ENCODE measurements at regions of chr2 and their contacts with region 1.

Region 1: DNA sequence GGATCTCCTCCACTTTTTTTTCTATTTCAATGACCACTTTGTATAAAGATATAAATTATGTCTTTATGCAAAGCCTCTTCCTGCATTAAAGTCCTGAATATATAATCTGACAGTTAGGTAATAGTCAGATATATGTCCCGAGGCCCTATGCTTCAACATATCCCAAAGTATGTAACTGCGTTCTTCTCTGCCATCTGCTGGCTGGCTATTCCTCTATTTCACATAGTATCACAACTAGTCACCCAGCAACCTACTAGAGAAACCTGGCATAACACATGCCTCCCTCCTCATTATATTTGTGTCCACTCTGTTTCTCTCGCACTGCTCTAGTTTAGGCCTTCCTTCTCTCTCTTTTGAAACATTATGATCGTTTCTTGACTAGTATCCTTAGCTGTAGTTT is 640.8 kb downstream of the DPP10 start:
- DNase-seq: no peak
- ATAC-seq: no peak
- H3K4me3 ChIP-seq: no peak overlapping the region
- H3K27ac ChIP-seq: no peak overlapping the region
- H3K4me1 ChIP-seq: no peaks in the 10 kb centered on the region
- H3K27me3 ChIP-seq: no peaks in the 10 kb centered on the region
- CTCF ChIP-seq: no peak
- POLR2A ChIP-seq: no peak
- RAD21 ChIP-seq: no peak

Region 2: GRCh38 chr2:115596659-115597375 is 513.6 kb after region 1 on chr2:
- CTCF ChIA-PET with region 1: no interaction called
- POLR2A ChIA-PET with region 1: no interaction called
- RAD21 ChIA-PET with region 1: no interaction called
- intact Hi-C with region 1: no loop called
- DNase-seq: no peak
- ATAC-seq: no peak
- H3K4me3 ChIP-seq: no peak overlapping the region
- H3K27ac ChIP-seq: no peak overlapping the region
- H3K4me1 ChIP-seq: no peaks in the 10 kb centered on the region
- H3K27me3 ChIP-seq: no peaks in the 10 kb centered on the region
- CTCF ChIP-seq: no peak
- POLR2A ChIP-seq: no peak
- RAD21 ChIP-seq: no peak

Region 3: DNA sequence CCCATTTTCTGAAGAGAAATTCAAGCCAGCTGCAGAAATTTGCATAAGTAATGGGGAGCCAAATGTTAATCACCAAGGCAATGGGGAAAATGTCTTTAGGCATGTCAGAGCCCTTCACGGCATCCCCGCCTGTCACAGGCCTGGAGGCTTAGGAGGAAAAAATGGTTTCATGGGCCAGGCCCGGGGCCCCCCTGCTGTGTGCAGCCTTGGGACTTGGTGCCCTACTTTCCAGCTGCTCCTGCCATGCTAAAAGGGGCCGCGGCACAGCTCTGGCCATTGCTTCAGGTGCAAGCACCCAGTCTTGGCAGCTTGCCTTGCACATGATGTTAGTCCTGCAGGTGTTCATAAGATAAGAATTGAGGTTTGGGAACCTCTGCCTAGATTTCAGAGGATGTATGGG is 594.9 kb after region 1 on chr2:
- CTCF ChIA-PET with region 1: no interaction called
- POLR2A ChIA-PET with region 1: no interaction called
- RAD21 ChIA-PET with region 1: no interaction called
- intact Hi-C with region 1: loop called (anchors 10 kb)
- DNase-seq: no peak
- ATAC-seq: no peak
- H3K4me3 ChIP-seq: no peak overlapping the region
- H3K27ac ChIP-seq: no peak overlapping the region
- H3K4me1 ChIP-seq: no peaks in the 10 kb centered on the region
- H3K27me3 ChIP-seq: no peaks in the 10 kb centered on the region
- CTCF ChIP-seq: no peak
- POLR2A ChIP-seq: no peak
- RAD21 ChIP-seq: no peak